ENCODE measurements at regions of chr22 and their contacts with region 1.

Region 1: GRCh38 chr22:22110548-22111266 is 128.1 kb upstream of the TOP3B start:
- DNase-seq: peak; percentile 93
- ATAC-seq: peak; percentile 97
- H3K4me3 ChIP-seq: no peak overlapping the region; the same call in 1 of the 2 replicates
- H3K27ac ChIP-seq: peak overlapping the region; percentile 88
- H3K4me1 ChIP-seq: peaks cover 18% of the 10 kb centered on the region
- H3K27me3 ChIP-seq: no peaks in the 10 kb centered on the region
- CTCF ChIP-seq: peak; percentile 77 to 89 (median 78)
- EP300 ChIP-seq: peak in 1 of 2 experiments; percentile 61; a peak in 1 of 4 replicates
- POLR2A ChIP-seq: no peak
- RAD21 ChIP-seq: peak; percentile 52

Region 2: GRCh38 chr22:21978564-21979386 is 131.9 kb before region 1 on chr22:
- CTCF ChIA-PET with region 1: no interaction called
- POLR2A ChIA-PET with region 1: no interaction called
- RAD21 ChIA-PET with region 1: no interaction called
- SMC1A ChIA-PET with region 1: no interaction called
- in situ Hi-C with region 1: no loop called
- intact Hi-C with region 1: no loop called
- DNase-seq: no peak
- ATAC-seq: no peak
- H3K4me3 ChIP-seq: no peak overlapping the region
- H3K27ac ChIP-seq: no peak overlapping the region
- H3K4me1 ChIP-seq: peaks cover 4% of the 10 kb centered on the region
- H3K27me3 ChIP-seq: no peaks in the 10 kb centered on the region
- CTCF ChIP-seq: no peak
- EP300 ChIP-seq: no peak
- POLR2A ChIP-seq: no peak; the same call in 1 of the 2 replicates
- RAD21 ChIP-seq: no peak

Region 3: GRCh38 chr22:22060200-22061084 is 50.3 kb before region 1 on chr22:
- CTCF ChIA-PET with region 1: interaction called, 104 read pairs
- POLR2A ChIA-PET with region 1: no interaction called
- RAD21 ChIA-PET with region 1: interaction called, 33 read pairs
- SMC1A ChIA-PET with region 1: interaction called, 38 read pairs
- in situ Hi-C with region 1: no loop called
- intact Hi-C with region 1: no loop called
- DNase-seq: no peak
- ATAC-seq: peak; percentile 99
- H3K4me3 ChIP-seq: no peak overlapping the region
- H3K27ac ChIP-seq: peak overlapping the region; percentile 43; the same call in 1 of the 2 replicates
- H3K4me1 ChIP-seq: peaks cover 15% of the 10 kb centered on the region
- H3K27me3 ChIP-seq: no peaks in the 10 kb centered on the region
- CTCF ChIP-seq: peak; percentile 74 to 98 (median 81)
- EP300 ChIP-seq: no peak
- POLR2A ChIP-seq: no peak
- RAD21 ChIP-seq: peak; percentile 68

Region 4: GRCh38 chr22:22123118-22123959 is 12.6 kb after region 1 on chr22:
- CTCF ChIA-PET with region 1: interaction called, 56 read pairs
- POLR2A ChIA-PET with region 1: interaction called, 8 read pairs
- RAD21 ChIA-PET with region 1: interaction called, 15 read pairs
- SMC1A ChIA-PET with region 1: interaction called, 22 read pairs
- in situ Hi-C with region 1: no loop called
- intact Hi-C with region 1: no loop called
- DNase-seq: no peak
- ATAC-seq: no peak
- H3K4me3 ChIP-seq: no peak overlapping the region
- H3K27ac ChIP-seq: no peak overlapping the region
- H3K4me1 ChIP-seq: no peaks in the 10 kb centered on the region
- H3K27me3 ChIP-seq: no peaks in the 10 kb centered on the region
- CTCF ChIP-seq: no peak
- EP300 ChIP-seq: no peak
- POLR2A ChIP-seq: no peak
- RAD21 ChIP-seq: no peak

Region 5: GRCh38 chr22:22144858-22145257 is 34.2 kb after region 1 on chr22:
- CTCF ChIA-PET with region 1: interaction called, 22 read pairs
- POLR2A ChIA-PET with region 1: no interaction called
- RAD21 ChIA-PET with region 1: interaction called, 11 read pairs
- SMC1A ChIA-PET with region 1: interaction called, 3 read pairs
- in situ Hi-C with region 1: no loop called
- intact Hi-C with region 1: no loop called
- DNase-seq: no peak
- ATAC-seq: no peak
- H3K4me3 ChIP-seq: no peak overlapping the region
- H3K27ac ChIP-seq: no peak overlapping the region
- H3K4me1 ChIP-seq: no peaks in the 10 kb centered on the region
- H3K27me3 ChIP-seq: no peaks in the 10 kb centered on the region
- CTCF ChIP-seq: peak in 1 of 3 experiments; percentile 12; a peak in 1 of 6 replicates
- EP300 ChIP-seq: no peak
- POLR2A ChIP-seq: no peak
- RAD21 ChIP-seq: no peak

Region 6: DNA sequence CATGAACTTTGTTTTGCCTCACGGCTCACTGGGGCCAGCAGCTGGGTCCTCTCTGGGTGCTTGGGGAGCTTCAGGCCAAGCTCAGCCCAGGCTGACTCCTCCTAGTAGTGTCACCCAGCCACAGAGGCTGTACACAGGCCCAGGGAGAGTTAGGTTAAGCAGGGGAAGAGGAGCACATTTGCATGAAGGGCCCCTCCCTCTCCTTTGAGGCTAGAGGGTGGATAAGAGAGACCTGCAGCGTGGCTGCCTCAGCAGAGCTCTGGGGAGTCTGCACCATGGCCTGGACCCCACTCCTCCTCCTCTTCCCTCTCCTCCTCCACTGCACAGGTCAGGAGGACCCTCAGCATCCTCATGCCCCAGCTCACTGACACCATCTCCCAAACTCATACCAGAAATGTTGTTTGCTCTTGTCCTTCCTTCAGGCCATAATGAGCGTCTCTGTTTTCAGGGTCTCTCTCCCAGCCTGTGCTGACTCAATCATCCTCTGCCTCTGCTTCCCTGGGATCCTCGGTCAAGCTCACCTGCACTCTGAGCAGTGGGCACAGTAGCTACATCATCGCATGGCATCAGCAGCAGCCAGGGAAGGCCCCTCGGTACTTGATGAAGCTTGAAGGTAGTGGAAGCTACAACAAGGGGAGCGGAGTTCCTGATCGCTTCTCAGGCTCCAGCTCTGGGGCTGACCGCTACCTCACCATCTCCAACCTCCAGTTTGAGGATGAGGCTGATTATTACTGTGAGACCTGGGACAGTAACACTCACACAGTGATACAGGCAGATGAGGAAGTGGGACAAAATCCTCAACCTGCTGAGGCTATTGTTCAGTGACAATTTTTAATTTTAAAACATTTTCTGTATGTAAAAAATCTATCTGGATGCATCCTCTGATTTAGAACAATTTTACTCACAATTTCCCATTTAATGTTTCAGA is 51.5 kb after region 1 on chr22:
- CTCF ChIA-PET with region 1: interaction called, 29 read pairs
- POLR2A ChIA-PET with region 1: interaction called, 5 read pairs
- RAD21 ChIA-PET with region 1: interaction called, 22 read pairs
- SMC1A ChIA-PET with region 1: interaction called, 33 read pairs
- in situ Hi-C with region 1: no loop called
- intact Hi-C with region 1: no loop called
- DNase-seq: peak; percentile 42
- ATAC-seq: peak; percentile 92
- H3K4me3 ChIP-seq: peak overlapping the region; percentile 30; the same call in 1 of the 2 replicates
- H3K27ac ChIP-seq: no peak overlapping the region; the same call in 1 of the 2 replicates
- H3K4me1 ChIP-seq: peaks cover 19% of the 10 kb centered on the region
- H3K27me3 ChIP-seq: no peaks in the 10 kb centered on the region
- CTCF ChIP-seq: no peak
- EP300 ChIP-seq: no peak
- POLR2A ChIP-seq: peak; percentile 86
- RAD21 ChIP-seq: no peak

Region 7: GRCh38 chr22:22207845-22208564 is 97.3 kb after region 1 on chr22:
- CTCF ChIA-PET with region 1: interaction called, 13 read pairs
- POLR2A ChIA-PET with region 1: no interaction called
- RAD21 ChIA-PET with region 1: interaction called, 6 read pairs
- SMC1A ChIA-PET with region 1: interaction called, 7 read pairs
- in situ Hi-C with region 1: no loop called
- intact Hi-C with region 1: no loop called
- DNase-seq: peak; percentile 62
- ATAC-seq: peak; percentile 94
- H3K4me3 ChIP-seq: no peak overlapping the region
- H3K27ac ChIP-seq: peak overlapping the region; percentile 45
- H3K4me1 ChIP-seq: peaks cover 3% of the 10 kb centered on the region
- H3K27me3 ChIP-seq: no peaks in the 10 kb centered on the region
- CTCF ChIP-seq: peak; percentile 66 to 78 (median 69); a peak in 5 of 6 replicates
- EP300 ChIP-seq: no peak
- POLR2A ChIP-seq: 0 out of 2 replicates have a peak, but pooled peaks have one; percentile 35
- RAD21 ChIP-seq: peak; percentile 81

Region 8: GRCh38 chr22:22942511-22943329 is 832.0 kb after region 1 on chr22:
- CTCF ChIA-PET with region 1: interaction called, 4 read pairs
- POLR2A ChIA-PET with region 1: no interaction called
- RAD21 ChIA-PET with region 1: interaction called, 5 read pairs
- SMC1A ChIA-PET with region 1: interaction called, 3 read pairs
- in situ Hi-C with region 1: no loop called
- intact Hi-C with region 1: loop called (anchors 5 kb)
- DNase-seq: peak; percentile 78
- ATAC-seq: peak; percentile 89
- H3K4me3 ChIP-seq: no peak overlapping the region
- H3K27ac ChIP-seq: peak overlapping the region; percentile 92
- H3K4me1 ChIP-seq: peaks cover 90% of the 10 kb centered on the region
- H3K27me3 ChIP-seq: no peaks in the 10 kb centered on the region
- CTCF ChIP-seq: peak; percentile 84 to 96 (median 87)
- EP300 ChIP-seq: 0 out of 4 replicates have a peak, but pooled peaks of 1 of the 2 experiments have one; percentile 61
- POLR2A ChIP-seq: no peak; the same call in 1 of the 2 replicates
- RAD21 ChIP-seq: peak; percentile 94